ENCODE measurements at regions of chr7 and their contacts with region 1.

Region 1: DNA sequence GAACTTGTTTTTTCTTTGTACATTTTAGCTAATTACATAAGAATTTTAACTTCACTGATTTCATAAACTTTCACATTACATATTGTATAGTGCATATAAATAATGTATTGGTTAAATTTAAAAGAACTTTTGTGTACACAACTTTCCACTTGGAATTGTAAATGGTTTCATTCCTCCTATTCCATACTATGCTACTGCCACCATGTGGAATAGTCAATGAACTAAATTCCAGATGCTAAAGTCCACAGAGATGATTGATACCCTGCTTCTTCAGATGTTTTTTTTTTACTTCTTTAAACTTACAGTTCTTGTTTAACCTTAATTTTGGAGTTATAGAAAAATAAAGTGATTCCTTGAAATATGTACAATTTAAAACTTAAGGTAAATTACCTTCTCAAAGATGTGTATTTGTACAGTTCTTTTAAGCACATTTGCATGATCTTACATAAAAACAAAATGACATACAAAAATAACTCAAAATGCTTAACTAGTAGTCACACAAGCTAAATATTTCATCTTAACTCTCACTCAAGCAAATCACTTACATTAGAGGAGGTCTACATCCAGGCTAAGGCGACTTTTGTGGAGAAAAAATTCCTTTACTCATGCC is 247.6 kb upstream of the HGF start:
- DNase-seq: no peak
- ATAC-seq: no peak
- H3K4me3 ChIP-seq: no peak overlapping the region
- H3K27ac ChIP-seq: no peak overlapping the region
- H3K4me1 ChIP-seq: no peaks in the 10 kb centered on the region
- H3K27me3 ChIP-seq: no peaks in the 10 kb centered on the region
- CTCF ChIP-seq: peak in 6 of 7 experiments; percentile 21 to 53 (median 43)
- POLR2A ChIP-seq: no peak

Region 2: DNA sequence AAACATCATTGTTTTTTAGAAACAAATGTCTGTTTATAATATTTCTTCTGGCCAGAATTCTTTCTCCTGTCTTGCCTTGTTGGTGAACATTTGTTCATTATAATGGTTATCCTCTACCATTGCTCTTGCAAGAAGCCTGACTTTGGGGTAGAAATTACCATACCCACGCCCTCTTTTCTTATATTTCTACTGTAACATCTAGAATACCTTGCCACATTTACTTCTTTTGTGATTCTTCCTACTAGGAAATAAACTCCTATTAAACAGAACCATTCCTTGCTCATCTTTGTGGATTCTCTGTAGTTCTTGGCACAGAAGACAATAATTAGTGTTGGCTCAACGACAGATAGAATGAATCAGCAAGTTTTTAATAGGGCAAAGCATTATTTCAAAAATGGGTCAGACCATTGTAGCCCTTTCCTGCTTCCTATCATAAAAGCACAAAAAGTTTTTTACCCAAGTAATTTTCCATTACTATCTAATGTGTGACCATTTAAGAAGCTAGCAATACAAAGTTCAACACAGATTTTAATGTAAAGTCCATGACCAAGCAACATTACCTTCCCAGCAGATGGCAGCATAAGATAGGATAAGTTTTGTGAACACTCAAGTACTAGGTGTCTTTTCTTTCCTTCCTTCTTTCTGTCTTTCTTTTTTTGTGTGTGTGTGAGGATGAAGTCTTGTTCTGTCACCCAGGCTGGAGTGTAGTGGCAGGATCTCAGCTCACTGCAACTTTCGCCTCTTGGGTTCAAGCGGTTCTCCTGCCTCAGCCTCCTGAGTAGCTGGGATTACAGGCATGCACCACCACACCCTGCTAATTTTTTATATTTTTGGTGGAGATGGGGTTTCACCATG is 518.0 kb before region 1 on chr7:
- intact Hi-C with region 1: loop called (anchors 10 kb)
- DNase-seq: peak in 2 of 4 donors; percentile 15 to 44
- ATAC-seq: peak; percentile 79
- H3K4me3 ChIP-seq: no peak overlapping the region
- H3K27ac ChIP-seq: no peak overlapping the region
- H3K4me1 ChIP-seq: no peaks in the 10 kb centered on the region
- H3K27me3 ChIP-seq: no peaks in the 10 kb centered on the region
- CTCF ChIP-seq: peak; percentile 11 to 74 (median 64)
- POLR2A ChIP-seq: no peak

Region 3: DNA sequence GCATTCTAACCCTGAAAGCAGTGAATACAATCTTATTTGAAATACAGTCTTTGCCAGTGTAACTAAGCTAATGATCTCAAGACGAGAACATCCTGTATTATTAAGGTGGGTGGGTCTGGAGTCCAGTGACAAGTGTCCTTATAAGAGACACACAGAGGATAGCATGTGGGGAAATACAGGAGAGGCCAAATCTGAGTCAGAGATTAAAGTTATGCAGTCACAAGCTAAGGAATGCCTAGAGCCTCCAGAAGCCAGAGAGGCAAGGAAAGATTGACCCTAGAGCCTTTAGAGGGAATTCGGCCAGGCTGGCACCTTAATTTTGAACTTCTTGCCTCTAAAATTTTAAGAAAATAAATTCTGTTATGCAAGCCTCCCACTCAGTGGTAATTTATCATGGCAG is 160.1 kb before region 1 on chr7:
- intact Hi-C with region 1: no loop called
- DNase-seq: no peak
- ATAC-seq: no peak
- H3K4me3 ChIP-seq: no peak overlapping the region
- H3K27ac ChIP-seq: no peak overlapping the region
- H3K4me1 ChIP-seq: no peaks in the 10 kb centered on the region
- H3K27me3 ChIP-seq: no peaks in the 10 kb centered on the region
- CTCF ChIP-seq: no peak
- POLR2A ChIP-seq: no peak